Psoas muscle (tissue), 8 donors: ENCODE measurements at regions of chr5 and their contacts with region 1.

Region 1: DNA sequence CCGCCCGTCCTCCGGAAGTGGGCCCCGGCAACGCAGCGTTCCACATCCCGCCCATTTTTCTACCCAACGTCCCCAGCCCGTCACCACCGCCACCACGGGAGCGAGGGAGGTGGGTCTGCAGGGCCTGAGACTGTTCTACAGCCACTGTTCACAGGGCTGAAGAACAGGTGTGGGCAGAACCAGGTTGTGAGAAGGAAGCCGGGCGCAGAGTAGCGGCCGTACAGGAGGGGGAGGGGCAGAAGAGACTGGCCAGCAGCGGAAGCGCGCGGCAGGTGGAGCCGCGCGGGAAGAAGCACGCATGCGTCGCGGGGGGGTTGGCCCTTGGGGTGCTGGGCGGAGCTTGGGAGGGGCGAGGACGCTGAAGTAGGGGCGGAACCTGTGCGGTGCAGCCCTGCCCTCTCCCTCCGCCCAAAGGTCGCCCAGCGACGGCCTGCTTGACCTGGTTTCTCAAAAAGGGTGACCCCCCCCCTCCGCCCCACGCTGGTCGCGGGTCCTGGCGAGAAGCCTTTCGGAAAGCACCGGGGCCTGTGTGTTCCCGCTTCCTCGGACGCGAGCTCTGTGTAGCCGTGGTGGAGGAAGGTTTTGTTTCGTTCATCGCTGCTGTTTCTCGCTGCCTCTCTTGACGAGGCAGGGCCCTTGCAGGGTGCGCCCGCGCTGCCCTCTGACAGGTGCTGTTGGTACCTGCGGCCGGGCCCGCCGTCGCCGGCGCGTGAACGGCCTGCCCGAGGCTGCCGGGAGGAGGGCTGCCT is 7.8 kb upstream of the MGAT1 start:
- DNase-seq: peak; percentile 96 to 99
- ATAC-seq: peak; percentile 92 to 96 (median 94)
- H3K4me3 ChIP-seq: peak overlapping the region; percentile 93
- H3K27ac ChIP-seq: peak overlapping the region; percentile 99
- H3K4me1 ChIP-seq: peaks cover 51% of the 10 kb centered on the region
- H3K27me3 ChIP-seq: no peaks in the 10 kb centered on the region
- CTCF ChIP-seq: no peak

Region 2: DNA sequence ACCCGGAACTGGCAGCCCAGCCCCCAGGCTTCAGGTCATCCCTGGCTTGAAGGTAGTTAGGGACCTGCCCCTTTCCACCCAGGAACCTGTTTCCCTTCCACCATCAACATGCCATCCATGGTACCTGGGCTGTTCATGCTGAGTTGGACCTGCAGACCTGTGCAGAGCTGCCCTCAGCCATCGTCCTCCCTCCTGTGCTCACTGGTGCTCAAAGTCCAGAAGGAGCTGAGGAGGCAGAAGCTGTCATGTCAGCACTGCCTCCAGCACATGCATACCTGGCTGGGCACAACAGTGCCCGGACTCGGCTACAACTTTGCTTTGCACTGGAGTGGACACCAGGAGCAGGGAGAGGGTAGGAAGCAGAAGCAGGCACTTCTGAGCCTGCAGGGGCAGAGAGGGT is 124.8 kb after region 1 on chr5:
- intact Hi-C with region 1: no loop called
- DNase-seq: no peak
- ATAC-seq: no peak
- H3K4me3 ChIP-seq: no peak overlapping the region
- H3K27ac ChIP-seq: no peak overlapping the region
- H3K4me1 ChIP-seq: no peaks in the 10 kb centered on the region
- H3K27me3 ChIP-seq: no peaks in the 10 kb centered on the region
- CTCF ChIP-seq: no peak

Region 3: DNA sequence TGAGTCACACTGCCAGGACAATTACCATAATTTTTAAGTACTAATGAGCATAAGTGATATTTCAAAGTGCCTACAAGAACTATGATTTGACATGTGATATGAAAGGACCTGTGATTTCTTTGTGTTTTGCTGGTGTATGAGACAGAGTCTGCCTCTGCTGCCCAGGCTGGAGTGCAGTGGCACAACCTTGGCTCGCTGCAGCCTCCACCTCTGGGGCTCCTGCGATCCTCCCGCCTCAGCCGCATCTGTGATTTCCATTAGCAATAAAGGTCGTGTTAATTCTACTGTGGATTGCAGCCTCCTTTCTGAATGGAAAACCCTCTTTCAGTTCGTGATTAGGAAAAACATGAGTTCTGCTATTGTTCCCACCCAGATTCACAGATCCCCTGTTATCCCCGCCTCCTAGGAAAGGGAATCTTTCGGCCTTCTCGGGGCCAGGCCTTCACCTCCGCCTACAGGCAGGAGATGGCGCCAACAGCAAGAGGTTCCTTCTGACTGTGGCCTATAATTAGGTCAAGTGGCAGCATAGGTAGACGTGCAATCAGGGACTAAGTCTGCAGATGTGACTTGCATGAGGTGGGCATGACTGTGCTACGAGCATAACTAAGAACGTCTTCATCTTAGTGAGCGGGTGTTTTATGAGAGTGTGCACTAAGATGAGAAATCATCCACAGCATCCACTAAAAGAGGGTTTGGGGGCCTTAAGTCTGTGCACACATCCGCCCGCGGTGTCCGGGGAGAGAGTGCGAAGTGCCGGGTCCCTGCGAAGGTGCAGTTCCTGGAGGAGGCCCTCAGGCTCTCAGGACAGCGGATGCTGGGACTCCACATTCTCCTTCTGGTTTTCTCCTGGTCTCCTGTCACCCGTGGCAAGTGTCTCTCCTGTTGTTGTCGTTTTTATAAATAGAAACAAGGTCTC is 371.5 kb after region 1 on chr5:
- intact Hi-C with region 1: loop called (anchors 10 kb)
- DNase-seq: peak; percentile 69 to 80
- ATAC-seq: peak; percentile 81 to 93 (median 90)
- H3K4me3 ChIP-seq: no peak overlapping the region
- H3K27ac ChIP-seq: peak overlapping the region; percentile 30
- H3K4me1 ChIP-seq: peaks cover 10% of the 10 kb centered on the region
- H3K27me3 ChIP-seq: peaks cover 0 to 2% (median 2%) of the 10 kb centered on the region in 3 donors
- CTCF ChIP-seq: peak; percentile 78